ENCODE measurements at regions of chrX and their contacts with region 1.

Region 1: DNA sequence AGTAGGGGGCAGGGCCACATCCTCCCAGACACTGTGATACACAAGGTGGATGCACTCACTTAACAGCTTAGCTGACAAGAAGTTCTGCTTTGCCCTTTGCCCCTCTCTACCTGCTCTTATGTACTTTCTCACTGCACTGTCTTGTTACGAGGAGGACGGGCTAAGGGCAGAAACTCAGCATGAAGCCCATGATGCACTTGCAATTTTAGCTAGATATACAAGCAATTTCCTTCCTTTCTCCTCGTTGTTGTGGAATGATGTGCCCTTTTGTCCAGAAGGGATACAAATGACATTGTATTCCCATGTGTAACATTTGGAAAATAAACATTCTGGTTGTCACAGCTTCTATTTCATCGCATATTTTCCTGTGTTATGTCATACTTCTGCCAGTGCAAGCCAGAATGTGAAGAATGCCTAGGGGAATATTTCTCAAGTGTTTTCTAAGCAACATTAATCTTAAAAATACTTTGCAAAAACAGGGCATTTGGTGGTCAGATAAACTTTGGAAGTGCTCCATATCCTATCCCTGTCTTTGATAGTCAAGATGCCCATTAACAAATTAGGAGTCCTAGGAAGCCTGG is 47.2 kb downstream of the MAOA start:
- DNase-seq: no peak
- ATAC-seq: peak; percentile 66

Region 2: DNA sequence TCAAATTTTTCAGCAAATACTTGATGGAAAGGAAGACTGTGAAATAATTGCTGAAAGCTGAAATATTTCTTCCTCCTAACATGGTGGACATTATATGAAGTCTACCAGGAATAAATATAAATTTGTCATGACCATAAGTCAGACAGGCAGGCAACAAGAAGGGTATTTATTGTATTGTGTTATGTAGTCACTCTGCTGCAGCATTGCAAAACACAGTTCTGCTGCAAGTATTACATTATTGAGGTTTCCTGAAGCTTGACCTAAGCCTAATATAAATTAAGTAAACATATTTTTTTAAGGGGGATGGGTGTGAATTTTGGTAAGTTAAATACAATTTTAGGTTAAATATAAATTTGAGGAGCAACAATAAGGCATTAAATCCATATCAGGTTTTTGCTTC is 107.4 kb before region 1 on chrX:
- intact Hi-C with region 1: no loop called
- DNase-seq: no peak
- ATAC-seq: no peak

Region 3: DNA sequence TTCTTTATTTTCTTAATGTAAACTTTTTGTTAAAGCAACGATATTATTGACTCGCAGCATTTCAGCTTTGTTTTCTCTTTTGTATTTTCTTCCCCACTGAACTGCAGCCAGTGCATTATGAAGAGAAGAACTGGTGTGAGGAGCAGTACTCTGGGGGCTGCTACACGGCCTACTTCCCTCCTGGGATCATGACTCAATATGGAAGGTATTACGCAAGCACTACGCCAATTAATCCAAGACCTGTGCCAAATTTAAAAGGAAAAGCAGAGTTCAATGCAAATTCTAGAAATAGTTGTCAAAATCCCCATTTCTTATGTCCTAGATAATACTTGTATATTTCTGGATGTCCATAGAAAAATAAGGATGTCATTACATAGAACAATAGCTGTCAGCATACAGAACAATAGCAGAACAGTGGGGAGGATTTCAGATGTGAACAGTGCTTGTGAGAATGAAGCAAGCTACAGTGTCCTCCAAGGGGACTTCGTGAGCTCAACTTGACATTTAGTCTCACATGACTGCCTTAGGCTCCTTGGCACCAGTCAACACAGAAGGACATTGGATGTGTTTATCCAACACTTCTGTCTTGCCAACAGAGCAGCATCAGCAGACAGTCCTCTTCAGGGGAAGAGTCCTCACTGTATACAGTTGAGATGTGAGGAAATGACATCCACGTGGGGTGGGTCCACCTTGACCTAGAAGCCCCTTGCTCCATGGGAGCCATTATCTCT is 38.7 kb after region 1 on chrX:
- intact Hi-C with region 1: loop called (anchors 5 kb)
- DNase-seq: no peak
- ATAC-seq: peak; percentile 92